Activated B cell treated with CpG ODN at 0.5 μM for 24 hours (primary cell): ENCODE measurements at regions of chr11 and their contacts with region 1.

Region 1: DNA sequence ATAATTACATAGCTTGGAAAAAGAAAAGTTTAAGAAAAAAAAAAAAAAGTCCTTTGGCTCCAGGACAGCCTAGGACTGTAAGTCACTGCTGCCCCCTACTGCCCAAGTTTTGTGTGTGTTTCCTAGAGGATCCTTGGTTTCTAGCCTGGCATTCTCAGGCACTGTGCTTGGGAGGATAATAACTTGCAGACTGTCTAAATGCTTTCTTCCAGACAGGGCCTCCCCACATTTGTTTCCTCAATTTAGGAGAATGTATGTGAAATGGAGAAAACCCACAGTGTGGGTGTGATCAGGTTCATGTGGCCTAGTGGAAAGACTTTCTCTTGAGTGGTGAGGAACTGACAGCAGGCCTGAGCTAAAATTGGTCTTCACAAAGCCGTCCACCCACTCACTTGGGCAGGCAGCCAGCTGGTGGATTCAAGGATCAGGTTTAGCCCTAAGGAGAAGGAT is 191.0 kb downstream of the NAV2 start:
- DNase-seq: no peak
- ATAC-seq: no peak
- H3K4me3 Mint-ChIP-seq: no peak overlapping the region
- H3K27ac Mint-ChIP-seq: no peak overlapping the region
- H3K4me1 Mint-ChIP-seq: no peaks in the 10 kb centered on the region
- H3K27me3 Mint-ChIP-seq: peaks cover 2% of the 10 kb centered on the region
- CTCF ChIP-seq: no peak

Region 2: DNA sequence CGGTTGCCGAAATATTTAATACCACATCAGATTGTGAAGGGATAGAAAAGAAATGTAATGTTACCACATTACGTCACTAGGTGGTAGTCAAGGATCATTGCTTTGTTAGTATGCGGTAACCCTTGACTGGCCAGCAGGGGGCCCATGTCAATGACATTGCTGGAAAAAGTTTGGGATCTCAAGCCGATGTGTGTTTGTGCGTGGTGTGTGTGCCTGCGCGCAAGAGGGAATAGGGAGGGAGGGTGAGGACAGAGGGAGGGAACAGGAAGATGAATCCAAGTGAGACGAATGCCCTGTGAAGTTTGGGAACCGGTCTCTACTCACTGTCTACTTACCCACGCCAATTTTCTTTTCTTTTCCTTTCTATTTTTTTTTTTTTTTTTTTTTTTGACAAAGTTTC is 832.4 kb before region 1 on chr11:
- CTCF ChIA-PET with region 1: no interaction called
- POLR2A ChIA-PET with region 1: no interaction called
- intact Hi-C with region 1: loop called (anchors 10 kb)
- DNase-seq: no peak
- ATAC-seq: peak; percentile 70
- H3K4me3 Mint-ChIP-seq: no peak overlapping the region
- H3K27ac Mint-ChIP-seq: no peak overlapping the region
- H3K4me1 Mint-ChIP-seq: peaks cover 2% of the 10 kb centered on the region
- H3K27me3 Mint-ChIP-seq: peaks cover 29% of the 10 kb centered on the region
- CTCF ChIP-seq: no peak

Region 3: DNA sequence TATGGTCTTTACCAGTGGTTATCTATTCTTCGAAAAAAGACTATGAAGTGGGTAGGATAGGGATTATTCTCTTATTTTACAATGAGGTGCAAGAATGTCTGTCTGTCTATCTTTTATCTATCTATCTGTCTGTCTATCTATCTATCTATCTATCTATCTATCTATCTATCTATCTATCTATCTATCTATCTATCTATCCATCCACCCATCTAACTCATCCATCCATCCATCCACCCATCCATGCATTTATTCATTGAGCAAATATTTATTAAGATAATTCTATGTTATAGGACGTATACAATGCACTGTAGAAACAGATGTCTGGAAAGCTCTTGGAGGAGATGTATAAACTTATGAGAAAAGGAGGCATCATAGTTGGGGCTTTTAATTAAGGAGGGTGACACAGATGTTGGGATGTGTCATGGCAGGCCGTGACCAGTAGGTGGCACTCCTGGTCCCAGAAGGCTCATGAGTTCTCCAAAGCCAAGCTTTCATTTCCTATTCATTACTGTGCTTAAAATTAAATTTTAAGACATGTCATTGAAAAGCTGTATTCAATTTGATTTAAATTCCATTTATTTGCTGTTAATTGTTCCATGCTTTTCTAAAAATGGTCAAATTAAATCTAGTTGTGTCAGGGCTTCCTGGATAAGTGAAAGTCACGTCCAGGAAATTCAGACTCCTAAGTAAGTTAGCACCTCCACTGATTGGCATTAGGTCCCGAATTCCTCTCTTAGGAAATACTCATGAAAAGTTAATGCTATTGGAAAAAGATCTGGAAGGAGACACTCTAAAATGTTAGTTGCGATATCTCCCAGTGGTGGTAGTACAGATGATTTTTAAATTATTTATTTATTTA is 643.9 kb before region 1 on chr11:
- CTCF ChIA-PET with region 1: no interaction called
- POLR2A ChIA-PET with region 1: no interaction called
- intact Hi-C with region 1: loop called (anchors 5 kb)
- DNase-seq: peak; percentile 45
- ATAC-seq: peak; percentile 87
- H3K4me3 Mint-ChIP-seq: no peak overlapping the region
- H3K27ac Mint-ChIP-seq: no peak overlapping the region
- H3K4me1 Mint-ChIP-seq: peaks cover 4% of the 10 kb centered on the region
- H3K27me3 Mint-ChIP-seq: no peaks in the 10 kb centered on the region
- CTCF ChIP-seq: peak; percentile 79

Region 4: GRCh38 chr11:19890308-19890707 is 13.3 kb before region 1 on chr11:
- CTCF ChIA-PET with region 1: no interaction called
- POLR2A ChIA-PET with region 1: no interaction called
- intact Hi-C with region 1: no loop called
- DNase-seq: no peak
- ATAC-seq: no peak
- H3K4me3 Mint-ChIP-seq: no peak overlapping the region
- H3K27ac Mint-ChIP-seq: no peak overlapping the region
- H3K4me1 Mint-ChIP-seq: no peaks in the 10 kb centered on the region
- H3K27me3 Mint-ChIP-seq: no peaks in the 10 kb centered on the region
- CTCF ChIP-seq: no peak